MCF 10A (cell line): ENCODE measurements at regions of chr5 and their contacts with region 1.

Region 1: GRCh38 chr5:126002222-126002897 is 420.8 kb upstream of the GRAMD2B start:
- DNase-seq: peak; percentile 86
- H3K4me3 Mint-ChIP-seq: peak overlapping the region; percentile 57
- H3K27ac Mint-ChIP-seq: peak overlapping the region; percentile 94
- H3K4me1 Mint-ChIP-seq: peaks cover 36% of the 10 kb centered on the region
- H3K27me3 Mint-ChIP-seq: no peaks in the 10 kb centered on the region
- CTCF ChIP-seq: no peak

Region 2: DNA sequence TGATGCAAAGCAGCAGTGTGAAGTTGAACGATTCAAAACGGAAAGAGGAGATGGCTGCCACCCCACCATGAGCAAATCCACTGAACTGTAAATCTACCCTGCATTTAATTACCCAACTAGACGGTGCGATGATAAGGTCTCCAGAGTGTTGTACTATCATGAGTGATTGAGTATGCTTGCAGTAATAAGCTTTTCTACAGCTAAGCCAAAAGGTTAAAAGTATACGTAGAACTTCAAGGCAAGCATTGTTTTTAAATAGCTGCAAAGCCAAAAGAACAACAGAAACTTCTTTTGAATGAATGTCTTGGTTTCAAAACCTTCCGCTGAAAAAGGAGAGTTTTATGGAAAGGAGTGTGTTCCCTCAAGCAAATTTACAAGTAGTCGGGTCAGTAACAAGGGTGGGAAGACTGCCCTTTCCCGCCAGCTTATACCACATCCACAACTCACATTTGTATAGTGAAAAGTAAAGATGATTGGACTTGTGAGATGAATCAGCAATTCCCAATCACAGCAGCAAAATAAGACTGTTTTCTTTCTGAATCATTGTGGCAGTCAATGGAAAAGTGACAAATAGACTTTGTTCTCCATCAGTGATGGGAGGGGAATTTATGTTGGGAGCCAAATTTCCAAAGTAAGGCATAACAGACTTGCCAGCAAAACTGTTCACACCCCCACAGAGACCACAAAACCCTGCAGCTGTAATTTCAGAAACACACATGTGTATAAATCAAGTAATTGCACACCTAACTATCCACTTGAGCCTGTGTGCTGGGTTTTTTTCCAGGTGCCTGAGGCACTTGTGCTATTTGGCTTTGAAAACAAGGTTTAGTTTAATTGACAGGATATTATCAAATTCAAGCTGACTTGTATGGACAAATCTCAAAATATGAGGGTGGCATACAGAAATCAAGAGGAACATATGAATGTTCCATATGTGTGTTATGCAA is 13.1 kb after region 1 on chr5:
- CTCF ChIA-PET with region 1: no interaction called
- POLR2A ChIA-PET with region 1: interaction called, 11 read pairs
- intact Hi-C with region 1: no loop called
- DNase-seq: peak; percentile 69
- H3K4me3 Mint-ChIP-seq: peak overlapping the region; percentile 30
- H3K27ac Mint-ChIP-seq: peak overlapping the region; percentile 78
- H3K4me1 Mint-ChIP-seq: peaks cover 16% of the 10 kb centered on the region
- H3K27me3 Mint-ChIP-seq: no peaks in the 10 kb centered on the region
- CTCF ChIP-seq: no peak

Region 3: GRCh38 chr5:126100767-126101166 is 98.4 kb after region 1 on chr5:
- CTCF ChIA-PET with region 1: no interaction called
- POLR2A ChIA-PET with region 1: no interaction called
- intact Hi-C with region 1: no loop called
- DNase-seq: no peak
- H3K4me3 Mint-ChIP-seq: no peak overlapping the region
- H3K27ac Mint-ChIP-seq: no peak overlapping the region
- H3K4me1 Mint-ChIP-seq: peaks cover 1% of the 10 kb centered on the region
- H3K27me3 Mint-ChIP-seq: no peaks in the 10 kb centered on the region
- CTCF ChIP-seq: no peak